HEK293T (cell line): ENCODE measurements at regions of chr17 and their contacts with region 1.

Region 1: GRCh38 chr17:27654654-27655524 is 23.9 kb downstream of the LGALS9 start:
- DNase-seq: peak; percentile 78

Region 2: GRCh38 chr17:27760069-27760885 is 105.4 kb after region 1 on chr17:
- CTCF ChIA-PET with region 1: interaction called, 27 read pairs
- POLR2A ChIA-PET with region 1: no interaction called
- DNase-seq: peak; percentile 48